Dorsolateral prefrontal cortex (tissue), 120 donors: ENCODE measurements at regions of chr19 and their contacts with region 1.

Region 1: GRCh38 chr19:3274942-3275582 is 50.6 kb downstream of the CELF5 start:
- DNase-seq: peak in 1 of 10 donors; percentile 63
- H3K4me3 ChIP-seq: peak overlapping the region in 56 of 59 donors; percentile 6 to 58 (median 39)
- H3K27ac ChIP-seq: peak overlapping the region in 15 of 59 donors; percentile 7 to 68 (median 27)
- H3K27me3 ChIP-seq: peaks cover 0 to 21% (median 0%) of the 10 kb centered on the region in 45 donors
- CTCF ChIP-seq: peak in 10 of 56 donors; percentile 11 to 37 (median 18)

Region 2: GRCh38 chr19:3184847-3185481 is 90.1 kb before region 1 on chr19:
- intact Hi-C with region 1: no loop called
- DNase-seq: peak; percentile 68 to 90 (median 82)
- H3K4me3 ChIP-seq: peak overlapping the region; percentile 74 to 100 (median 97)
- H3K27ac ChIP-seq: peak overlapping the region in 58 of 59 donors; percentile 36 to 98 (median 93)
- H3K27me3 ChIP-seq: no peaks in the 10 kb centered on the region
- CTCF ChIP-seq: peak in 8 of 56 donors; percentile 6 to 25 (median 13)

Region 3: DNA sequence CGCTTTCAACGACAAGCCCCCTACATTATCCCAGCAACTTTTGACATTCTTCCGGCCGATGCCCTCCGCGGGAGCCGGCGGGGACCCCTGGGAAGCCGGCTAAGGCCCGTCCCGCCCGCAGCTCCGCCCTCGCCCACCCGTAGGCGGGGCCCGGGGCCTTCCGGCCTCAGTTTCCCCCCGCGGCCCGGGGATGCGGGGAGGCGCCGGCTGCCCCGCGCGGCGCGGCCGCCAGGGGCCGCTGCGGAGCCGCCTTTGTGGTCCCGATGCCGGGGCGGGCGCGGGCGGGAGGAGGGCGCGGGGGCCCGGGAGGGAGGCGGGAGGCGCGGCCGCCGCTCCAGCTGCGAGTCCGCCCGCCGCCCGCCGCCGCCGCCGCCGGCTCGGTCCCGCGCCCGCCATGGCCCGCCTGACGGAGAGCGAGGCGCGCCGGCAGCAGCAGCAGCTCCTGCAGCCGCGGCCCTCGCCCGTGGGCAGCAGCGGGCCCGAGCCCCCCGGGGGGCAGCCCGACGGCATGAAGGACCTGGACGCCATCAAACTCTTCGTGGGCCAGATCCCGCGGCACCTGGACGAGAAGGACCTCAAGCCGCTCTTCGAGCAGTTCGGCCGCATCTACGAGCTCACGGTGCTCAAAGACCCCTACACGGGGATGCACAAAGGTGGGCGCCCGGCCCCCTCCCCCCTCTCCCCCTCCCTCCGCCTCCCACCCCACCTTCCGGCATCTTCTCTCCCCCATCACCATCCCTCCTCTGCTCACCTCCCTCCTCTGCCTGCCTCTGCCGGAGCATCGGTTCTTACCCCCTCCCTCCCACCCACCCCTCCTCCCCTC is 50.5 kb before region 1 on chr19 and contains the start of gene CELF5:
- intact Hi-C with region 1: loop called in 1 of 2 experiments (anchors 5 kb)
- DNase-seq: peak in 8 of 10 donors; percentile 43 to 78 (median 64)
- H3K4me3 ChIP-seq: peak within 1 kb of the TSS in 58 of 59 donors; percentile 38 to 74 (median 58)
- H3K27ac ChIP-seq: peak within 1 kb of the TSS in 48 of 59 donors; percentile 32 to 89 (median 70)
- H3K27me3 ChIP-seq: peaks cover 0 to 11% (median 0%) of the 10 kb centered on the region in 45 donors
- CTCF ChIP-seq: peak in 48 of 56 donors; percentile 10 to 74 (median 53)
- total RNA-seq, gene CELF5: 29.0 to 154 (median 91.2) TPM

Region 4: GRCh38 chr19:3365836-3366752 is 91.0 kb after region 1 on chr19 and contains the start of gene NFIC:
- intact Hi-C with region 1: no loop called
- DNase-seq: peak in 5 of 10 donors; percentile 65 to 77 (median 69)
- H3K4me3 ChIP-seq: peak within 1 kb of the TSS; percentile 59 to 90 (median 75)
- H3K27ac ChIP-seq: peak within 1 kb of the TSS; percentile 63 to 99 (median 92)
- H3K27me3 ChIP-seq: no peaks in the 10 kb centered on the region
- CTCF ChIP-seq: no peak
- total RNA-seq, gene NFIC: 98.0 to 269 (median 135) TPM